Activated CD8-positive, alpha-beta T cell treated with anti-CD3 and anti-CD28 coated beads for 36 hours (primary cell): ENCODE measurements at regions of chr19 and their contacts with region 1.

Region 1: GRCh38 chr19:54023191-54023590 is 31.8 kb downstream of the CACNG6 start:
- DNase-seq: no peak
- ATAC-seq: no peak
- H3K4me3 Mint-ChIP-seq: no peak overlapping the region
- H3K27ac Mint-ChIP-seq: no peak overlapping the region
- H3K4me1 Mint-ChIP-seq: peaks cover 10% of the 10 kb centered on the region
- H3K27me3 Mint-ChIP-seq: peaks cover 20% of the 10 kb centered on the region
- CTCF ChIP-seq: no peak

Region 2: GRCh38 chr19:53849237-53849676 is 173.9 kb before region 1 on chr19:
- CTCF ChIA-PET with region 1: interaction called, 21 read pairs
- POLR2A ChIA-PET with region 1: no interaction called
- intact Hi-C with region 1: loop called (anchors 5 kb)
- DNase-seq: no peak
- ATAC-seq: no peak
- H3K4me3 Mint-ChIP-seq: no peak overlapping the region
- H3K27ac Mint-ChIP-seq: no peak overlapping the region
- H3K4me1 Mint-ChIP-seq: peaks cover 4% of the 10 kb centered on the region
- H3K27me3 Mint-ChIP-seq: peaks cover 25% of the 10 kb centered on the region
- CTCF ChIP-seq: no peak

Region 3: DNA sequence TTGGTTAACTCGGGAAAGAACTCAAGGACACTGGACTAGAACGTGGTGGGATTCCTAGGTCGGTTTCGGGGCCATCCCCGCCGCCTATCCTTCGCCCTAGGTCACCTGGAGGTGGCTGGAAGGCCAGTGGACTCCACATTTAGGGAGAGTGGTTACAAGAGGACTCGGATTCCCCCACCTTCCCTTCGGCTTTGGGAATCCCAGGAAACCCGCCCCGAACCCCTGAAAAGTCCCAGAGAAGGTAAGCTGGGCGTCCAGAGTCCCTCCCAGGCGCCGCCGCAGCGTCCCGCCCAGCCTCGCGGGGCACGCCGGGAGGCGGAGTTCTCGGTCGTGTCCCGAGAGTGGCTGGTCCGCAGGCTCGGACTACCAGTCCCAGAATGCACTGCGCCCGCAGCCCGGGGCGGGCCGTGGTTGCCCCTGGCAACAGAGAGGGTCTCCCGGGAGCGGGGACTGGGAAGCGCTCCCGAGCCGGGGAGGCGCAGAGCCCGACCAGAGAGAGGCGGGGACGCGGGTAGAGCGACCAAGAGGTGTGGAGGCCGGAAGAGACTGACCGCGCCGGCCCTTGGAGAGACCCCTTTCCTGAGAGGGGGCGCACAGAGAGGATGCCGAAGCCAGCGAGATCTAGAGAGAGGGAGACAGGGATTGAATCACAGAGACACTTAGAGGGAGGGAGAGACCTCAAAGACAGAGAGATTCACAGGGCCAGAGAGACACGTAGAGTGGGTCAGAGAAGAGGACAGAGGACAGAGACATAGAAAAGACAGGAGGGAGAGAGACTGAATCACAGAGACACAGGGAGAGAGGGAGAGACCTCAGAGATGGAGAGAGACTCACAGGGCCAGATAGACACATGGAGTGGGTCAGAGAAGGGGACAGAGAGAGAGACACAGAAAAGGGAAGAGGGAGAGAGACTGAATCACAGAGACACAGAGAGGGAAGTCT is 143.8 kb before region 1 on chr19:
- CTCF ChIA-PET with region 1: no interaction called
- POLR2A ChIA-PET with region 1: no interaction called
- intact Hi-C with region 1: no loop called
- DNase-seq: peak; percentile 88
- ATAC-seq: peak; percentile 88
- H3K4me3 Mint-ChIP-seq: no peak overlapping the region
- H3K27ac Mint-ChIP-seq: no peak overlapping the region
- H3K4me1 Mint-ChIP-seq: peaks cover 46% of the 10 kb centered on the region
- H3K27me3 Mint-ChIP-seq: peaks cover 12% of the 10 kb centered on the region
- CTCF ChIP-seq: no peak

Region 4: GRCh38 chr19:54035215-54036178 is 12.3 kb after region 1 on chr19:
- CTCF ChIA-PET with region 1: interaction called, 10 read pairs
- POLR2A ChIA-PET with region 1: no interaction called
- intact Hi-C with region 1: no loop called
- DNase-seq: no peak
- ATAC-seq: no peak
- H3K4me3 Mint-ChIP-seq: no peak overlapping the region
- H3K27ac Mint-ChIP-seq: no peak overlapping the region
- H3K4me1 Mint-ChIP-seq: no peaks in the 10 kb centered on the region
- H3K27me3 Mint-ChIP-seq: peaks cover 15% of the 10 kb centered on the region
- CTCF ChIP-seq: no peak

Region 5: GRCh38 chr19:54041969-54042606 is 18.9 kb after region 1 on chr19:
- CTCF ChIA-PET with region 1: interaction called, 12 read pairs
- POLR2A ChIA-PET with region 1: no interaction called
- intact Hi-C with region 1: no loop called
- DNase-seq: no peak
- ATAC-seq: no peak
- H3K4me3 Mint-ChIP-seq: no peak overlapping the region
- H3K27ac Mint-ChIP-seq: no peak overlapping the region
- H3K4me1 Mint-ChIP-seq: no peaks in the 10 kb centered on the region
- H3K27me3 Mint-ChIP-seq: peaks cover 6% of the 10 kb centered on the region
- CTCF ChIP-seq: no peak